ENCODE measurements at regions of chr11 and their contacts with region 1.

Region 1: GRCh38 chr11:17839973-17840611 is 105.5 kb downstream of the KCNC1 start:
- DNase-seq: no peak
- ATAC-seq: no peak
- H3K4me3 ChIP-seq: no peak overlapping the region
- H3K27ac ChIP-seq: no peak overlapping the region
- H3K4me1 ChIP-seq: peaks cover 0 to 7% (median 0%) of the 10 kb centered on the region in 9 donors
- H3K27me3 ChIP-seq: no peaks in the 10 kb centered on the region
- CTCF ChIP-seq: no peak

Region 2: GRCh38 chr11:17786824-17787525 is 53.1 kb before region 1 on chr11:
- intact Hi-C with region 1: loop called in 1 of 10 experiments (anchors 5 kb)
- DNase-seq: no peak
- ATAC-seq: no peak
- H3K4me3 ChIP-seq: no peak overlapping the region
- H3K27ac ChIP-seq: no peak overlapping the region
- H3K4me1 ChIP-seq: no peaks in the 10 kb centered on the region
- H3K27me3 ChIP-seq: no peaks in the 10 kb centered on the region
- CTCF ChIP-seq: no peak

Measured in heart right ventricle (tissue), 16 donors.